ENCODE measurements at regions of chr9 and their contacts with region 1.

Region 1: DNA sequence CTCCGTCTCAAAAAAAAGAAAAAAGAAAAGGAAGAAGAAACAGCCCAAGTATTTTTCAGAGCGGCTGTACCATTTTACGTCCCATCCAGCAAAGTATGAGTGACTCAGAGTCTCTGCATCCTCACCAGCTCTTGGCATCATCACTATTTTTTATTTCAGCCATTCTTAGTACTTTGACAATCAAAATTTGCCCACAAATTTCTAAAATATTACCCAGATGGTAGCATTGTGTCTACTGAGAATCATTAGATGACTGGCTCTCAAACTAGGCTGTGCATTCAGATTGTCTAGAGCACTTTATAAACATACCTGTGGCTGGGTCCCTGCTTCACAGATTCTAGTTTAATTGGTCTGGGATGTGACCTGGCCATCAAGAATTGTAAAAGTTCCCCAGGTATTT is 21.6 kb upstream of the MELK start:
- DNase-seq: no peak
- H3K4me3 ChIP-seq: no peak overlapping the region
- H3K27ac ChIP-seq: no peak overlapping the region
- H3K4me1 ChIP-seq: no peaks in the 10 kb centered on the region
- H3K27me3 ChIP-seq: no peaks in the 10 kb centered on the region
- CTCF ChIP-seq: no peak
- EP300 ChIP-seq: no peak
- POLR2A ChIP-seq: no peak

Region 2: GRCh38 chr9:36407122-36407723 is 143.9 kb before region 1 on chr9:
- in situ Hi-C with region 1: loop called (anchors 5 to 10 kb)
- intact Hi-C with region 1: loop called (anchors 1 kb)
- DNase-seq: peak; percentile 54
- H3K4me3 ChIP-seq: no peak overlapping the region
- H3K27ac ChIP-seq: peak overlapping the region in 2 of 4 donors; percentile 27 to 40
- H3K4me1 ChIP-seq: peaks cover 0 to 16% (median 0%) of the 10 kb centered on the region in 4 donors
- H3K27me3 ChIP-seq: no peaks in the 10 kb centered on the region
- CTCF ChIP-seq: peak; percentile 90 to 97 (median 94)
- EP300 ChIP-seq: no peak
- POLR2A ChIP-seq: no peak

Region 3: DNA sequence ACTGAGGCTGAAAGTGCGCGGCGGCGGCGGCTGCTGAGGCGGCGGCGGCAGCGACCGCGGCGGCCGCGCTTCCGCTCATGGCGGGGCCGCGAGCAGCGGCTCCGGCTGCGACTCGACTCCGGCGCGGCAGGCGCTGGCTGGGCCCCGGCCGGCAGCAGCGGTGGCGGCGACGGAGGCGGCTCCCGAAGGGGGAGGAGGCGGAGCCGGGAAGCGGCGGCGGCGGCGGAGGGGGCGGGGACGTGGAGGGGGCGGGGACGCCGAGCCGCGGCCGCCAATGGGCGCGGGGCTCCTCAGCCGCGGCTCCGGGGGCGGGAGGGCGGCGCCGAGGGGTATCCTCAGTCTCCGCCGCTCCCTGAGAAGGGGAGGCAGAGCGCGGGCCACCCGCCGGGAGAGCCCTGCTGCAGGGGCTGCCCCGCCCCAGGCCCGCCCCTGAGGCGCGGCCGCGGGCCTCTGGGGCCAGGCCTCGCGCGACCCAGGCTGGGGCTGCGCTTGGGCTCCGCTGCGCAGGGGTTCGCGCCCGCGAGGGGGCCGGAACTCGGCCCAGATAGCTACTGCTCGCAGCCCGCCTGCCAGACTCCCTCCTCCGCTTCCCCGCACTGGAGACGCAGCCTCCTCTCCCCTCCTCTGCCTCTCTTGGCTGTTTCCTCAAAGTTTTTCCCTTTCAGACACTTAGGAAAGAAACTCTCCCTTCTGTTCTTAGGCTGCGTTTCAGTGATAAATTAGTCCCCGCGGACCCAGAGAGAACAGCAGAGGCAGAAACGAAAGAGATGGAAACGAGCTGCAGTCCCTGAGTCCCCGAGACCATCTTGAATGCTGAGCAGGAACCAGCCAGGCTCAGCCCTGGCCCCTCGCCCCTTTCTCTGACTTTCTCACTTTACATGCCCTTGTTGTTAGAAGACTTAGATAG is 63.4 kb before region 1 on chr9:
- in situ Hi-C with region 1: loop called in 1 of 4 experiments (anchors 10 kb)
- intact Hi-C with region 1: no loop called
- DNase-seq: peak; percentile 94
- H3K4me3 ChIP-seq: peak overlapping the region; percentile 47 to 100 (median 87)
- H3K27ac ChIP-seq: peak overlapping the region; percentile 90 to 96 (median 94)
- H3K4me1 ChIP-seq: peaks cover 10 to 40% (median 23%) of the 10 kb centered on the region in 4 donors
- H3K27me3 ChIP-seq: no peaks in the 10 kb centered on the region
- CTCF ChIP-seq: peak in 4 of 5 experiments; percentile 5 to 59 (median 30)
- EP300 ChIP-seq: no peak
- POLR2A ChIP-seq: peak; percentile 86

Measured in transverse colon (tissue), 4 donors.